GM13976 (cell line): ENCODE measurements at regions of chr19 and their contacts with region 1.

Region 1: DNA sequence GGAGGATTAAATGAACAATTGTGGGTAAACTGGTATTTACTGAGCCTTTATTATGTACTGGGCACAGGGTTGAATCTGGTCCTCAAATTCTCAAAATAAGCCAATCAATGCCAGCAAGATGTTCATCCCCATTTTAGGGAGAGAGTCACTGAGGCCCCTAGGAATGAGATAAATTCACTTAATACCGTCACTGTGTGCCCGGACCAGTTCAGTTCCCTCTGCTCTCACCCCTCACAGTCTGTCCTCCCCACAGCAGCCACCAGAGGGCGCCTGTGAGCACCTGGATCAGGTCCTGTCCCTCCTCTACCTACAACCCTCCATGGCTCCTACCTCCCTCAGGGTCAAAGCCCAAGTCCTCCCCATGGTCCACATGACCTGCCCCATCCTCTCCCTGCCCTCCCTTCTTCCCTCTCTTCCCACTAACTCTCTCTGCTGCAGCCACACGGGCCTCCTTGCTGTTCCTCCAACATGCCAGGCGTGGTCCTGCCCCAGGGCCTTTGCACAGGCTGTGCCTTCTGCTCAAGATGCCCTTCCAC is 42.0 kb upstream of the NFIC start:
- DNase-seq: peak; percentile 77
- CTCF ChIP-seq: peak; percentile 71

Region 2: GRCh38 chr19:3434712-3435553 is 110.5 kb after region 1 on chr19:
- in situ Hi-C with region 1: loop called (anchors 5 kb)
- DNase-seq: peak; percentile 99
- CTCF ChIP-seq: no peak

Region 3: GRCh38 chr19:3471954-3472655 is 147.7 kb after region 1 on chr19:
- in situ Hi-C with region 1: loop called (anchors 10 kb)
- DNase-seq: peak; percentile 75
- CTCF ChIP-seq: peak; percentile 54

Region 4: GRCh38 chr19:3500429-3501130 is 176.2 kb after region 1 on chr19 and contains the start of gene DOHH:
- in situ Hi-C with region 1: no loop called
- DNase-seq: peak; percentile 96
- CTCF ChIP-seq: no peak